ENCODE measurements at regions of chr11 and their contacts with region 1.

Region 1: DNA sequence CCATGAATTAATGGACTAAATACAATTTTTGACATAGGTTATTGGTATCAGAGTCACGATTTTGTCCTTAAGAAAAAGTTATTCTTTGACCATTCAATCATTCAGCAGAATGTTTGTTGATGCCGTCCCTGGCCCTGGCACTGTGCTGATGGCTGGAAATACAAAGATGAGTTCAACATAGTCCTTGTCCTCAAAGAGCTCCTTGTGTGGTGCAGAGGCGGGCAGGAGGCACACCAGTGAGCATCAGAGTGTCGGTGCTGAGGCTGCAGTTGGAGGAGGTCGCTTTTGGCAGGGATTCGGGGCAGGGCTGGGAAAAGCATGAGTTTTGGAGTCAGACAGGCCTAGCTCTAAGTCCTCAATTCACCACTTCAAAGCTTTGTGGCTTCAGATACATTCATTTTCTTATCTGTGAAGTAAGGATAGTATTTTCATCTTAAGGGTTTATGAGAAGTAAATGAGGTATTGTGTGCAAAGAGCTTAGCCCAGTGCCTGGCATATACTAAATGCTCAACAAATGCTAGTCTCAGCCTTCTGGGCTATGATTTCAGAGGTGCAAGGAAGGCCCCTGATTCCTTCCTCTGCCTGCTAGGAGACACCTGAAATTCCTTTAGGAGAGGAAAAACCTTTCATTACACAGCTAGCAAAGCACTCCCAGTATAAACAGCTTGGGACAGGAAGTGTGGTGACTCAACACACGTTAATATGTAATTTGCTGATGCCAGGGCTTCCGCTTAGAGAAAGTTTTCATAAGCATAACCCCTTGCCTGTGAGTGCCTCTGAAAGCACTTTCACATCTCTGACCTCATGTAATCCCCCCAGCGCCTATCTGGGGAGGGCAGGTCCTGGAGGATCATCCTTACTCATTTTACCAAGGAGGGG is 113.8 kb downstream of the NECTIN1 start:
- H3K4me3 Mint-ChIP-seq: no peak overlapping the region
- H3K27ac Mint-ChIP-seq: peak overlapping the region; percentile 81
- H3K4me1 Mint-ChIP-seq: peaks cover 47% of the 10 kb centered on the region
- H3K27me3 Mint-ChIP-seq: peaks cover 15% of the 10 kb centered on the region

Region 2: GRCh38 chr11:119525180-119525866 is 89.9 kb before region 1 on chr11:
- intact Hi-C with region 1: loop called (anchors 5 kb)
- H3K4me3 Mint-ChIP-seq: no peak overlapping the region
- H3K27ac Mint-ChIP-seq: peak overlapping the region; percentile 88
- H3K4me1 Mint-ChIP-seq: peaks cover 55% of the 10 kb centered on the region
- H3K27me3 Mint-ChIP-seq: peaks cover 2% of the 10 kb centered on the region

Region 3: GRCh38 chr11:119584193-119585037 is 30.8 kb before region 1 on chr11:
- intact Hi-C with region 1: loop called (anchors 2 kb)
- H3K4me3 Mint-ChIP-seq: peak overlapping the region; percentile 74
- H3K27ac Mint-ChIP-seq: peak overlapping the region; percentile 50
- H3K4me1 Mint-ChIP-seq: peaks cover 46% of the 10 kb centered on the region
- H3K27me3 Mint-ChIP-seq: peaks cover 37% of the 10 kb centered on the region